ENCODE measurements at regions of chr10 and their contacts with region 1.

Region 1: DNA sequence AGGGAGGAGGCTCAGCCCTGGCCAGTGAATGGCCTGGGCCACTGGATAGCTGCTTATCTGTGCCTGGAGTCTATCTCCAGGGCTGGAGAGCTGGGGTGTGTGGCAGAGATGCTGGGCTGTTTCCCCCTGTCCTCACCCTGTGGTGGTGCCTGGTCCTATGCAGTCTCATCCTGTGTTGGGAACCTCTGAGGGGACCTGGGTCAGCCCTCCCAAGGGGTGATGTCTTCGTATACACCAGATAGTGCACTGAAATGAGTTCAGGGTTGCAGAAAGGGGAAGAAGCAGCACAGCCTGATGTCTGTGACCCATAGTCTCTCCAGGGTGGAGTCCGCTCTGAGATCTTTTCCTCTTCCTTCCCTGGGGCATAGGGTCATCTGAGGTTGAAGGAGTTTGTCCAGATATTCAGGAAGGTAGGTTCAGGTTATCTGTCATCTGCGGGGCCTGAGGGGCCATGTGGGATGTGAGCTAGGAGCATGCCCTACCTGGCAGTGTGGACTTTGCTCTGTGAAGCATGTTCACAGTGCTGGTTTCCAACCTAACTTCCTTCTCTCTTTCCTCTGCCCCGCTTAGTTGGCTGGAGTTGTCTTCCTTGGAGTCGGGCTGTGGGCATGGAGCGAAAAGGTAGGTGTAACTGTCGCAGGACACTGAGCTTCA is 33.4 kb upstream of the SH2D4B start:
- DNase-seq: peak in 1 of 10 donors; percentile 49
- ATAC-seq: no peak
- H3K4me3 Mint-ChIP-seq: peak overlapping the region in 9 of 10 donors; percentile 57 to 83 (median 64)
- H3K27ac Mint-ChIP-seq: peak overlapping the region; percentile 87 to 98 (median 95)
- H3K4me1 Mint-ChIP-seq: peaks cover 51 to 83% (median 73%) of the 10 kb centered on the region in 4 donors
- H3K27me3 Mint-ChIP-seq: no peaks in the 10 kb centered on the region

Region 2: DNA sequence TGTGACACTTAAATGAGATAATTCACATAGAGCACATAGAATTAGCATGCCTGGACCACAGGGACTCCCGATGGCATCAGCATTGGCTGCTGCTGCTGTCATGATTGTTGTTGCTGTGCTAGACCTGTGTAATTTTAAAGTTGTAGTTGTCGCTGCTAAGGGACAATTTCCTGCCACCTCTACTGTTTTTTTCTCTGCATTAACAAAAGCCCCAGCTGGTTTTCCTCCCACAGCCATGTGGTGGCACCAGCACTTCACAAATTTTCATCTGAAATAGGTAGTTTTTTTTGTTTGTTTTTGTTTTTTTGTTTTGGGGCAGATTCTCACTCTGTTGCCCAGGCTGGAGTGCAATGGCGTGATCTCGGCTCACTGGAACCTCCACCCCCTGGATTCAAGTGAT is 121.3 kb before region 1 on chr10:
- POLR2A ChIA-PET with region 1: interaction called, 12 read pairs
- DNase-seq: peak; percentile 23 to 77 (median 55)
- ATAC-seq: peak; percentile 58 to 67
- H3K4me3 Mint-ChIP-seq: peak overlapping the region in 3 of 10 donors; percentile 5 to 62 (median 42)
- H3K27ac Mint-ChIP-seq: peak overlapping the region in 9 of 10 donors; percentile 6 to 90 (median 57)
- H3K4me1 Mint-ChIP-seq: peaks cover 7 to 16% (median 16%) of the 10 kb centered on the region in 4 donors
- H3K27me3 Mint-ChIP-seq: peaks cover 0 to 1% (median 0%) of the 10 kb centered on the region in 5 donors

Region 3: GRCh38 chr10:80408242-80409101 is 95.8 kb before region 1 on chr10 and contains the start of gene PRXL2A:
- POLR2A ChIA-PET with region 1: interaction called, 11 read pairs
- DNase-seq: peak; percentile 72 to 89 (median 78)
- ATAC-seq: peak; percentile 95
- H3K4me3 Mint-ChIP-seq: peak within 1 kb of the TSS; percentile 85 to 96 (median 94)
- H3K27ac Mint-ChIP-seq: peak within 1 kb of the TSS; percentile 45 to 92 (median 79)
- H3K4me1 Mint-ChIP-seq: peaks cover 19 to 41% (median 27%) of the 10 kb centered on the region in 4 donors
- H3K27me3 Mint-ChIP-seq: peaks cover 0 to 6% (median 0%) of the 10 kb centered on the region in 5 donors
- polyA plus RNA-seq, gene PRXL2A: 13.8 to 21.3 (median 16.1) TPM

Region 4: GRCh38 chr10:80530251-80530650 is 26.0 kb after region 1 on chr10:
- POLR2A ChIA-PET with region 1: interaction called, 11 read pairs
- DNase-seq: peak in 6 of 10 donors; percentile 17 to 39 (median 32)
- ATAC-seq: peak; percentile 43 to 53
- H3K4me3 Mint-ChIP-seq: peak overlapping the region; percentile 59 to 89 (median 78)
- H3K27ac Mint-ChIP-seq: peak overlapping the region; percentile 89 to 100 (median 93)
- H3K4me1 Mint-ChIP-seq: peaks cover 48 to 77% (median 74%) of the 10 kb centered on the region in 4 donors
- H3K27me3 Mint-ChIP-seq: no peaks in the 10 kb centered on the region

Region 5: GRCh38 chr10:80619036-80619435 is 114.8 kb after region 1 on chr10:
- POLR2A ChIA-PET with region 1: no interaction called
- DNase-seq: no peak
- ATAC-seq: no peak
- H3K4me3 Mint-ChIP-seq: no peak overlapping the region
- H3K27ac Mint-ChIP-seq: no peak overlapping the region
- H3K4me1 Mint-ChIP-seq: no peaks in the 10 kb centered on the region
- H3K27me3 Mint-ChIP-seq: peaks cover 0 to 1% (median 0%) of the 10 kb centered on the region in 5 donors

Region 6: GRCh38 chr10:80730522-80730921 is 226.2 kb after region 1 on chr10:
- POLR2A ChIA-PET with region 1: no interaction called
- DNase-seq: no peak
- ATAC-seq: no peak
- H3K4me3 Mint-ChIP-seq: no peak overlapping the region
- H3K27ac Mint-ChIP-seq: no peak overlapping the region
- H3K4me1 Mint-ChIP-seq: no peaks in the 10 kb centered on the region
- H3K27me3 Mint-ChIP-seq: peaks cover 0 to 39% (median 33%) of the 10 kb centered on the region in 5 donors